MCF 10A (cell line): ENCODE measurements at regions of chr15 and their contacts with region 1.

Region 1: DNA sequence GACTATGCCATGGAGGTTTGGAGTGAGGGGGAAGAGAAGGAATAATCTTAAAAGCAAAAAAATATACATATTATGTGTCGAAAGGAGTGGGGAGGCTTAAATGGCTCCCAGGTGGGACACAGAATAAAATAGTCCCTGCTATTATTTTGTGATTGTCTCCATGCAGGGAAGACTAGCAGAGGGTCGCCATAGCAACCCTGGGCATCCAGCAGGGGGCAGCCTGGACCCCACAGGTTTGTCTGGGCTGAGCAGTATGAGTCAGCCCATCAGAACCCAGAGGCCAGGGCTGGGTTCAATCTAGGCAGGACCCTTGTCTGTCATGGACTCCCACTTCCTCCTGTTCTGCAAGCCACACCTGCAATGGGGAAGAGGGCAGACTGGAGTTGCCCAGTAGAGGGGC is 17.6 kb upstream of the LINGO1 start:
- DNase-seq: no peak
- H3K4me3 Mint-ChIP-seq: no peak overlapping the region
- H3K27ac Mint-ChIP-seq: no peak overlapping the region
- H3K4me1 Mint-ChIP-seq: no peaks in the 10 kb centered on the region
- H3K27me3 Mint-ChIP-seq: peaks cover 48% of the 10 kb centered on the region
- CTCF ChIP-seq: no peak

Region 2: GRCh38 chr15:77525400-77525811 is 124.9 kb before region 1 on chr15:
- CTCF ChIA-PET with region 1: no interaction called
- POLR2A ChIA-PET with region 1: no interaction called
- intact Hi-C with region 1: no loop called
- DNase-seq: no peak
- H3K4me3 Mint-ChIP-seq: no peak overlapping the region
- H3K27ac Mint-ChIP-seq: no peak overlapping the region
- H3K4me1 Mint-ChIP-seq: no peaks in the 10 kb centered on the region
- H3K27me3 Mint-ChIP-seq: no peaks in the 10 kb centered on the region
- CTCF ChIP-seq: no peak

Region 3: DNA sequence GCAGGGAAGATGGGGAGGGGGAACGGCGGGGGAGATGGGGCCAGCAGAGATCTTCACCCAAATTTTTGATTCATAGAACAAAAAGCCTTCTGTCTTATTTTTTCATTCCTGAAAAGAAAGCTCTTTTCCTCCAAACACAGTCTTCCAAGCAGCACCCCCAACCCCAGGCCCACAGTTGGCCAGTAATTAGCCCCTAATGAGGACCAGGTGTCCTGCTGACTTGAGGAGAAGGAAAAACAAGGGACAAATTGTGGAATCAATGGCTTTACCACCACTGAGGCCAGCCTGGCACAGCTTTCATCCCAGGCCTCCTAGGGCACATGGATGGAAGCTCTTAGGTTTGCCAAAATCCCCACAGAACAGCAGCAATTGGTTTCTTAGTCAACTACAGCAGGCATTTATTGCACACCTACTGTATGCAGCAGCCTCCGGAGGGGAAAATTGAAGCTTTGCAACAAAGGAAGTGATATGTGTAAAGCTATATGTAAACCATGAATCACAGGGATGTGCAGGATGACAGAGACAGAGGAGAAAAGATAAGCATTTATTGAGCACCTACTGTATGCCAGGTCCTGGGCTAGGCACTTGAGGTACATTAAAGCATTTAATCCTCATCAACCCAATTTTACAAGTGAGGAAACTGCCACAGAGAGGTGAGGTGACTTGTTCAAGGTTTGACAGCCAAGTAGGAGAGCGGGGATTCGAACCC is 227.8 kb after region 1 on chr15:
- CTCF ChIA-PET with region 1: no interaction called
- POLR2A ChIA-PET with region 1: no interaction called
- intact Hi-C with region 1: loop called (anchors 5 kb)
- DNase-seq: no peak
- H3K4me3 Mint-ChIP-seq: no peak overlapping the region
- H3K27ac Mint-ChIP-seq: no peak overlapping the region
- H3K4me1 Mint-ChIP-seq: no peaks in the 10 kb centered on the region
- H3K27me3 Mint-ChIP-seq: no peaks in the 10 kb centered on the region
- CTCF ChIP-seq: no peak